Right cardiac atrium (tissue), 5 donors: ENCODE measurements at regions of chr13 and their contacts with region 1.

Region 1: GRCh38 chr13:110915057-110915873 is at the start of gene ANKRD10:
- DNase-seq: peak; percentile 99 to 100 (median 100)
- ATAC-seq: peak; percentile 96
- H3K4me3 ChIP-seq: peak within 1 kb of the TSS; percentile 70
- H3K27ac ChIP-seq: peak within 1 kb of the TSS; percentile 97
- H3K4me1 ChIP-seq: peaks cover 9% of the 10 kb centered on the region
- H3K27me3 ChIP-seq: no peaks in the 10 kb centered on the region
- total RNA-seq, gene ANKRD10: 56.5 to 90.9 (median 61.6) TPM

Region 2: DNA sequence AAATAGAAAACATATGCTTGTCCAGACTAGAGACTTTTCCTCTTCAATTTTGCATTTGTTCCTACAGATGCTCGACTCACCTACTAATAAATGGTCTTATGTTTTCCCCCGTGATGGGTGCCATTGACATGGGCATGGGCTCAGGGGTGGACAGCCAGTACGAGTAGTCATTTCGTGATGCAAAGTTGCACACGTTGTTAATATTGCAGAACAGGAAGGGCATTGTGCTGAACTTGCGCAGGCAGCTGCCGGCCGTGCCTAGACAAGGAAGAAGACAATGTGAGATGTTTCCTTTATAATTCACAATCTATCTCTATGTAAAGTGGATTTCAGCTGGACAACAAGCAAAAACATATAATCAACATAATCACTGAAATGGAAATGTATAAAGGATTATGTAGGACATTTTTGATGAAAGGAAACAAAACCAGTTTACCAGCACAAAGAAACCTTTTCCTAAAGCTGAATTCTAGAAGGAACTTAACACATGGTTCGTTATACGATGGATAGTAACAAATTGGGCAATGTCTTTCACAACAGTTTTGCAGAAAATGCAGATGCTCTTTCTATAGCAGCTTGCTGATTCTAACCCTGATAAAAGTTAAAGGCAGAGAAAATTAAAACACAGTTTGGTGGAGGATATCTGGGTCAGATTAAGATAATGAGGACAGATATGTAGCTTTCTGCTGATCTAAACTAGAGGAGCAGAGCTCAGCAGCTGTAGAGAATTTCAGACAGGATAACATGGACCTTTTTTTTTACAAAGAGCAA is 754.0 kb before region 1 on chr13:
- intact Hi-C with region 1: no loop called
- DNase-seq: peak in 1 of 3 donors; percentile 60
- ATAC-seq: peak in 1 of 2 donors; percentile 47
- H3K4me3 ChIP-seq: no peak overlapping the region
- H3K27ac ChIP-seq: no peak overlapping the region
- H3K4me1 ChIP-seq: peaks cover 2% of the 10 kb centered on the region
- H3K27me3 ChIP-seq: no peaks in the 10 kb centered on the region

Region 3: DNA sequence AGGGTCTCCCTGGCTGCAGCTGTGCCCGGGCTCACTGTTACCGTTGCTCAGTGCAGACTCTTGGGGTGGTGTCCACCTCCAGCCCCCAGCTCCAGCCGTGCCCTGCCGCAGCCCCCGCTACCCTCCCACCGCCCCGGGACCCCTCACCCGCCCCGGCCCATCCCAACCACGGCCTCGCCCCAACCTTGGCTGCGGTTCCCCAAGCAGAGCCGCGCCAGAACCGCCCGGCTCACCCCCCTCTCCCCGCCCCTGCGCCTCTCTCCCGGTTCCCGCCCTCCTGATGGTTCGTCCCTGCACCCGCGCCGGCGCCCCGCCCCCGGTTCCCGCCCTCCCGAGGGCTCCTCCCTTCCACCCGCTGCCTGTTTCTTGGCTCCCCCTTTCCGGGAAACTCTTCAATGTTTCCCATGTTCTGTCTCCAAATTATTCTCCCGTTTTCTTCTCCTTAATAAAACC is 40.7 kb before region 1 on chr13:
- intact Hi-C with region 1: loop called in 2 of 4 experiments (anchors 5 kb)
- DNase-seq: peak; percentile 91 to 96 (median 96)
- ATAC-seq: peak; percentile 84 to 93
- H3K4me3 ChIP-seq: peak overlapping the region; percentile 41
- H3K27ac ChIP-seq: no peak overlapping the region
- H3K4me1 ChIP-seq: peaks cover 3% of the 10 kb centered on the region
- H3K27me3 ChIP-seq: no peaks in the 10 kb centered on the region

Region 4: DNA sequence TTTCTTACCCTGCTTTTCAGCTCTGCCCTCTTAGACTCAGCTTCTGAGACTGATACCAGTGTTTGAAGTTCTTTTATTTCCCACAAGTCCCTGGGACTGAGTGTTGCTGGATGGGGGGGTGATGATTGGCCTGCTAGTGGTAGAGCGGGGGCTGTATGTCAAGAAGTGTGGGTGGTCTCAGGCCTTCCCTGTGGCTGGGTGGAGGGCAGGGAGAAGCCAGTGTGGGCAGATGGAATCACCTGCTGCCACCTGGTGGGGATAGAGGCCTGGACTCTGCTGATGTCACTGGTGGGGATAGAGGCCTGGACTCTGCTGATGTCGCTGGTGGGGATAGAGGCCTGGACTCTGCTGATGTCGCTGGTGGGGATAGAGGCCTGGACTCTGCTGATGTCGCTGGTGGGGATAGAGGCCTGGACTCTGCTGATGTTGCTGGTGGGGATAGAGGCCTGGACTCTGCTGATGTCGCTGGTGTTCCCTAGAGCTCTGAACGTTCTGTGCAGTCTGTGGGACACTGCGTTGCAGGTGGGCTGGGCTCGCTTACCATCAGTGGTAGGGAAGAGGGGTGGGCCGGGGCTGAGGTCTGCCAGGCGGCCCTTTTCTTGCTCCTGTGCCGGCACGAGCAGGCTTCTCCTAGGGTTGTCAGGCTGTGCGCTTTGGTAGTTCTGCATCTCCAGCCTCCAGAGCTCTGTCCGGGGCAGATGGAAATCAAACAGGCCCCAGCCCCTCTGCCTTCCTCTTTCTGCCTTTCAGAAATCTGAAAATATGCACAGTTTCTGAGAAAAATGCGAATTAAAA is 301.1 kb after region 1 on chr13:
- intact Hi-C with region 1: loop called in 1 of 4 experiments (anchors 10 kb)
- DNase-seq: peak in 2 of 3 donors; percentile 60 to 63
- ATAC-seq: peak; percentile 38 to 54
- H3K4me3 ChIP-seq: no peak overlapping the region
- H3K27ac ChIP-seq: no peak overlapping the region
- H3K4me1 ChIP-seq: peaks cover 29% of the 10 kb centered on the region
- H3K27me3 ChIP-seq: no peaks in the 10 kb centered on the region